Dorsolateral prefrontal cortex (tissue), 120 donors: ENCODE measurements at regions of chr7 and their contacts with region 1.

Region 1: GRCh38 chr7:127708788-127709187 is 56.8 kb downstream of the SND1 start:
- DNase-seq: peak in 8 of 10 donors; percentile 61 to 92 (median 74)
- H3K4me3 ChIP-seq: no peak overlapping the region
- H3K27ac ChIP-seq: peak overlapping the region in 12 of 59 donors; percentile 4 to 49 (median 32)
- H3K27me3 ChIP-seq: no peaks in the 10 kb centered on the region
- CTCF ChIP-seq: peak; percentile 71 to 97 (median 88)

Region 2: DNA sequence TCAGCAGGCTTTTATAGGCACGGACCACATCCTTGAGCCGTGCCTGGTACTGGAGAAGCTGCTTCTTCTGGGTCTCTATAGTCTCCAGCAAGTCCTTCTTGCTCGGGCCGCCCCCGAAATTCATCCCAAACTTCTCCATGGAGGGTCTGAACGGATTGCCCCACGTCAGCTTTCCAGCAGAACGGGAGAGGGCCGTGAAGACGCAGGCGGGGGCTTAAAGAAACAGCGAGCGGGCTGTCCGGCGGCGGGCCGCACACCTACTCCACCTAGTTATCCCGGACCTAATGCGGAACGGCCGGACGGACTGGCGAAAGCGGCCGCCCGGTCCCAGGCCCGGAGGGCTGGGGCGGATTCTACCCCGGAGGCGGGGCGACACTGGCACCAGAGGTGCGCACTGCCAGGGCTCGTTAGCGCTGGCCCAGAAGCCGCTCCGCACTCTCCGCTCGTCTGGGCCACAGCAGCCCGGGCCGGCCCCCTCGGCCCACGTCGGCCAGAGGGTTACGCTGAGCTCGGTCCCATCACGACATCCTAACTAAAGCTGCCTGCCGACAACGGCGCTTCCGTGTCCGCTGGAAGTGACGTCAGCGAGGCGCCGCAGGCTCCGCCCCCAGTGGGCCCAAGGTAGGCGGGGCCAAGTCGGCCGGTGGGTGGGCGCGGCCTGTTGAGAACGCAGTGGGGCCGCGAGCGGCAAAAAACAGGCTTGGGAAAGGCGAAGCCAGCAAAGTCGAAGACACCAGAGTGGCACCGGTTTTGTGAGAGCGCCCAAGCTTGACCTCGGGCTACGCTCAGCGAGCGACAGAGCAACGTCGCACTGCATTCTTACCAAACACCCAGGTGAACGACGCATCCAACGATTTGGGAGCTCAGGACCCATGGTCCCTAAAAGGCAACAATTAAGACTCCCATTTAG is 123.5 kb before region 1 on chr7 and contains the start of gene GCC1:
- intact Hi-C with region 1: loop called in 1 of 2 experiments (anchors 2 kb)
- DNase-seq: peak; percentile 90 to 97 (median 93)
- H3K4me3 ChIP-seq: peak within 1 kb of the TSS; percentile 64 to 100 (median 95)
- H3K27ac ChIP-seq: peak within 1 kb of the TSS in 57 of 59 donors; percentile 21 to 94 (median 82)
- H3K27me3 ChIP-seq: no peaks in the 10 kb centered on the region
- CTCF ChIP-seq: peak in 16 of 56 donors; percentile 1 to 42 (median 20)
- total RNA-seq, gene GCC1: 9.6 to 17.6 (median 12.6) TPM

Region 3: GRCh38 chr7:127943541-127944521 is 235.0 kb after region 1 on chr7:
- intact Hi-C with region 1: loop called (anchors 5 to 10 kb)
- DNase-seq: peak; percentile 55 to 85 (median 76)
- H3K4me3 ChIP-seq: peak overlapping the region in 31 of 59 donors; percentile 1 to 48 (median 24)
- H3K27ac ChIP-seq: peak overlapping the region in 58 of 59 donors; percentile 39 to 92 (median 79)
- H3K27me3 ChIP-seq: no peaks in the 10 kb centered on the region
- CTCF ChIP-seq: peak in 13 of 56 donors; percentile 6 to 38 (median 15)

Region 4: GRCh38 chr7:128135515-128136214 is 426.9 kb after region 1 on chr7:
- intact Hi-C with region 1: loop called in 1 of 2 experiments (anchors 5 kb)
- DNase-seq: peak in 7 of 10 donors; percentile 45 to 83 (median 55)
- H3K4me3 ChIP-seq: peak overlapping the region; percentile 45 to 81 (median 69)
- H3K27ac ChIP-seq: peak overlapping the region in 13 of 59 donors; percentile 1 to 74 (median 33)
- H3K27me3 ChIP-seq: peaks cover 0 to 4% (median 0%) of the 10 kb centered on the region in 45 donors
- CTCF ChIP-seq: peak; percentile 50 to 99 (median 88)

Region 5: DNA sequence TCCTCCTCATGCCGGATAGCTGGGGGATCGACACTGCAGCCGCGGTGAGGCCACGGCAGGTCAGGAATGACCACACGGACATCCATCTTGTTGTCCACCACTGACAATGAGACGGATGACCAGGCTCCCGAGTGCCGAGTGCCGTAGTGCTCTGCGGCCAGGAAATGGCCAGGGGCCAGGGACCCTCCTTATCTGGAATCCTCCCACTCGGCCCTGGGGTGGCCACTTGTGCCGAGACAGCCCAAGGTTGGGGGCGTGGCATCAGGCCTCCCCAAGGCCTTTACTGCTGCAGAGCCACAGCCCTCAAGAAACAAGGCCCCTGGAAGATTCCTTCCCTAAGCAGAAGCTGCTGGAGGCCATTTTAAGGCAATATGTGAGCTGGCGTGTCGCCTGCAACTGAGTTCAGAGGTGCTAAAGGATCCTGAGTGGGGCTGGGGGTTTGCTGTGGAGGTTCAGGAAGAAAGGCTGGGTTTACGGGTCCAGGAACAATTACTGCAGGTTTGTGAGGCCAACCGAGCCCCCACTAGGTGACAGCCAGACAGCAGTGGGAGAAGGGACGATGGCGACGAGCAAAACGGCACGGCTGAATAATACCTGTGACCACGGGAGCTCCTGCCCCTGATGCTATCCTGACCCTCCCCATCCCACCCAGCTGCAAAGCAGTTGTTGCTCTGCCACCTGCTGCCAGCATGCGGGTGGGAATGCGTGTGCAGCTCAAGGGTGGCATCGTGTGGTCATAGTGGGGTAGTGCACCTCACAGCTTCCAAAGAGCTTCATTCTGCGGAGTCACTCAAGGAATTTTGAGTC is 500.6 kb after region 1 on chr7:
- intact Hi-C with region 1: loop called (anchors 1 to 2 kb)
- DNase-seq: peak in 8 of 10 donors; percentile 62 to 82 (median 72)
- H3K4me3 ChIP-seq: no peak overlapping the region
- H3K27ac ChIP-seq: peak overlapping the region in 4 of 59 donors; percentile 24 to 48 (median 34)
- H3K27me3 ChIP-seq: peaks cover 0 to 5% (median 0%) of the 10 kb centered on the region in 45 donors
- CTCF ChIP-seq: peak; percentile 90 to 100 (median 99)